Heart left ventricle (tissue), 16 donors: ENCODE measurements at regions of chr15 and their contacts with region 1.

Region 1: DNA sequence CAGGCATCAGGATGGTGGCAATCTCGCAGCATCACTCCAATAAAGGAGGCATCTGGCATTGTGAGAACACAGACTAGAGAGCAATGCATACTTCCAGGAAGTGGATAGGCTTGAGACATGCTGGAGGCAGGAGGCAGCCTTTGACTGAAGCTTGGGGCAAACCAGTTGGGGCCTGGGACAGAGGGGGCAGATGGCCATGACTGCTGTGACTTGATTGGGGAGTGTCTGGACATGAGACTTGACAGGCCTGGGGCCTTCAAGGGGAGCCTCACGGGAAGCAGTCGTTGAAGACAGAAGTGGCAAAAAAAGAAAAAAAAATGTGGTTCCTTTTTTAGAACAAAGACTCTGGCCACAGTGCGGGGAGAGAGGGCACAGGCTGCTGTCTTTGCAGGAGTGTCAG is 44.7 kb upstream of the CHRNA7 start:
- DNase-seq: no peak
- ATAC-seq: no peak
- H3K4me3 ChIP-seq: no peak overlapping the region
- H3K27ac ChIP-seq: no peak overlapping the region
- H3K4me1 ChIP-seq: no peaks in the 10 kb centered on the region
- H3K27me3 ChIP-seq: peaks cover 0 to 17% (median 0%) of the 10 kb centered on the region in 9 donors
- CTCF ChIP-seq: no peak
- POLR2A ChIP-seq: no peak

Region 2: DNA sequence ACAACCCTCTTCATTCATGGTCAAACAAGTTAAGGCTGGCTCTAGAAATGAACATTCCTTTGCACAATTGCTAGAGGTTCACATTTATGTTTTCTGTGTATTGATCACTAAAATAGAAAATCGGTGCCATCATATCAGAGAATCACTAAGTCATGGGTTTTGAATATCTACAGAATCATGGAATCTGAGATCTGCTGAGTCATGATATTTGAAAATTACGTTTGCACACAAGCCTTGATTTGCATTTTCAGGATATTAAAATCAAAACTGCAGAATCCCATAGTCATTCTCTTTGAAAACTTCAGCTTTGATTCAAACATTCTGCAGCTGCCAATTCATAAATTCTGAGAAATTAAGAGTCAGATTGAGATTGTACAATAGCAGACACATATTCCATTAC is 18.6 kb after region 1 on chr15:
- intact Hi-C with region 1: loop called in 1 of 10 experiments (anchors 2 kb)
- DNase-seq: no peak
- ATAC-seq: no peak
- H3K4me3 ChIP-seq: no peak overlapping the region
- H3K27ac ChIP-seq: no peak overlapping the region
- H3K4me1 ChIP-seq: no peaks in the 10 kb centered on the region
- H3K27me3 ChIP-seq: peaks cover 0 to 13% (median 0%) of the 10 kb centered on the region in 9 donors
- CTCF ChIP-seq: no peak
- POLR2A ChIP-seq: no peak

Region 3: DNA sequence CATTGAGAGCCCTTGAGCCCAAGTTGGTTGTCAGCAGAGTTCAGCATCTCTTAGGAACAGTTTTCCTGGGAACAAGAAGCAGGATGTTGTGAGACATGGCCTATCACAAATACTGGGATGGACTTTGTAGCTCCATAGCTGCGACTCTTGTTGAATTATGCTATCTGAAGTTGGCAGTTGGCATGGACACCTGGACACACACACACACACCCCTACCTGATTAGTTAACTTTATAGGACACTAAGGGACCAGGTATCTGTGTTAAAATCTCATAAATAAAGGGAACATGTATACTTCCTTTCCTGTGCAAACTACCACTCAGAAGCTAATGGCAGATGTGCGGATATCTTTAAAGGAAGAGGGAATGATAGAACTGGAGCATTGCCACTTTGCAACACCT is 34.5 kb after region 1 on chr15:
- intact Hi-C with region 1: no loop called
- DNase-seq: no peak
- ATAC-seq: no peak
- H3K4me3 ChIP-seq: no peak overlapping the region
- H3K27ac ChIP-seq: no peak overlapping the region
- H3K4me1 ChIP-seq: no peaks in the 10 kb centered on the region
- H3K27me3 ChIP-seq: peaks cover 0 to 35% (median 2%) of the 10 kb centered on the region in 9 donors
- CTCF ChIP-seq: no peak
- POLR2A ChIP-seq: no peak

Region 4: GRCh38 chr15:32104061-32104995 is 118.7 kb after region 1 on chr15:
- intact Hi-C with region 1: no loop called
- DNase-seq: no peak
- ATAC-seq: peak in 1 of 4 donors; percentile 25
- H3K4me3 ChIP-seq: no peak overlapping the region
- H3K27ac ChIP-seq: no peak overlapping the region
- H3K4me1 ChIP-seq: peaks cover 0 to 16% (median 6%) of the 10 kb centered on the region in 12 donors
- H3K27me3 ChIP-seq: no peaks in the 10 kb centered on the region
- CTCF ChIP-seq: no peak
- POLR2A ChIP-seq: no peak